Colonic mucosa (tissue), 4 donors: ENCODE measurements at regions of chr3 and their contacts with region 1.

Region 1: DNA sequence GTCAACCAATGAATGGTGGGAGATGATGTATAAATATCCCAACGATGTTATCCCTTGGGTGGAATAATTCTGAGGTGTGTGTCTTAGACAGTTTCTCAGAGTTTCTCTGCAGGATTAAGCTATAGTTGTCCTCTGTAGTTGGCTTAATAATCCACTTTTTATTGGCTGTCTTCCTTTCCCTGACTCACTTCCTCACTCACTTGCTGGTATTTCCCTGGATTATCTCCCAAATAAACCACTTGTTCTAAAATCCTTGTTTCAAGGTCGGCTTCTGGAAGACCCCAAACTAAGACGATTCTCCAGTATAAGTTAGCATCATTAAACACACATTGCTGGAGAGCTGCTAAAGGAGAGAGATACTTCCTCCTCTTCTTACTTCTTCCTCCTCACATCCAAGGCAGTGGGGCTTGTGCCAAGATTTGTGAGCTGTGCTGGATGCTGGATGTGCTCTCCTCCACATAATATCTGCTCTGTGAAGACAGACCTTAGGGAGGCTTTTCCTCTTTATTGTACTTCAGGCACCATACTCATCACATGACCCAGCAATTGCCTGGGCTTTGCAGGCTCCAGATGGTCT is 22.5 kb upstream of the ROPN1 start:
- DNase-seq: no peak
- H3K4me3 ChIP-seq: no peak overlapping the region
- H3K27ac ChIP-seq: no peak overlapping the region
- H3K4me1 ChIP-seq: no peaks in the 10 kb centered on the region
- H3K27me3 ChIP-seq: no peaks in the 10 kb centered on the region
- CTCF ChIP-seq: no peak

Region 2: GRCh38 chr3:123757281-123757940 is 257.0 kb before region 1 on chr3:
- intact Hi-C with region 1: no loop called
- DNase-seq: peak; percentile 73
- H3K4me3 ChIP-seq: no peak overlapping the region
- H3K27ac ChIP-seq: peak overlapping the region; percentile 34
- H3K4me1 ChIP-seq: peaks cover 26% of the 10 kb centered on the region
- H3K27me3 ChIP-seq: no peaks in the 10 kb centered on the region
- CTCF ChIP-seq: no peak

Region 3: GRCh38 chr3:124078953-124079911 is 64.8 kb after region 1 on chr3:
- intact Hi-C with region 1: loop called (anchors 5 kb)
- DNase-seq: peak; percentile 45
- H3K4me3 ChIP-seq: no peak overlapping the region
- H3K27ac ChIP-seq: no peak overlapping the region
- H3K4me1 ChIP-seq: no peaks in the 10 kb centered on the region
- H3K27me3 ChIP-seq: no peaks in the 10 kb centered on the region
- CTCF ChIP-seq: peak; percentile 66

Region 4: DNA sequence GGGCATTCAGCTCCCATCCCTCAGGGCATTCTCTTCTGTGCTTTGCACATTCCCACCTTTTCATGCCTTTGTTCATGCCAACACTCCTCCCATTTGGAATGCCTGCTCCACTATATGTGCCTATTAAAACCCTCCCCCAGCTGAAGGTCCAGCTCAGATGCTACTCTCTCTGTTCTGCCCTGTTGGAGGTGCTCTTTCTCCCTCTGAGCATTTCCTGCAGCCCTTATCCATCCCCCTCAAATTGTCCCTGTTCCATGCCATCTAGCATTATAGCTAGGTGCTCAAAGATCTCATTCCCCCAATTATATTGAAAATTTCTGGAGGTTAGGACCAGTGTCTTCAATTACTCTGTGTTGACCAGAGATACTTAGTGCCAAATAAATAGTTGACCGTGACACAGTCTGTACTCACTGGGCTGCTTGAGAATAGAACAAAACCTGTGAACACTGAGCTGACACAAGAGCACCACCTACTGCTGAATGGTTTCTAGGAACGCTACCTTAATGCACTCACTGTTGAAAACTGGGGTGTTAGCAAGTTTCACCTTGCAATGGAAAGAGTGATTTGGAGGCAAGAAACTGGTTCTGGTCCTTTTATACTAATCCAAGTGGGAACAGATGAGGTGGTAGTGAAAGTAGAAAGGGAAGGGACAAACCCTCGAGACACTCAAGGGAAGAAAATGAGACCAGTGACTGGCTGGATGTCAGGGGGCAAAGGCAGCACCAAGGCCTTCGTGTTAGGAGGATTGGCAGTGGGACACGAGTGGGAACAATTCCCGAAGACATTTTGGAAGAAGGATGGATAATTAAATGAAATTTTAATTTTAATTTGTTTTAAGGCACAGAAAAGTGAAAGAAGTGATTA is 267.2 kb after region 1 on chr3:
- intact Hi-C with region 1: loop called (anchors 10 kb)
- DNase-seq: peak; percentile 40
- H3K4me3 ChIP-seq: no peak overlapping the region
- H3K27ac ChIP-seq: no peak overlapping the region
- H3K4me1 ChIP-seq: peaks cover 3% of the 10 kb centered on the region
- H3K27me3 ChIP-seq: no peaks in the 10 kb centered on the region
- CTCF ChIP-seq: peak; percentile 36